MCF 10A (cell line): ENCODE measurements at regions of chr22 and their contacts with region 1.

Region 1: GRCh38 chr22:40597526-40598430 is 38.7 kb downstream of the MRTFA start:
- DNase-seq: no peak
- H3K4me3 Mint-ChIP-seq: peak overlapping the region; percentile 45
- H3K27ac Mint-ChIP-seq: peak overlapping the region; percentile 35
- H3K4me1 Mint-ChIP-seq: peaks cover 41% of the 10 kb centered on the region
- H3K27me3 Mint-ChIP-seq: no peaks in the 10 kb centered on the region
- CTCF ChIP-seq: no peak

Region 2: GRCh38 chr22:40610329-40610850 is 12.6 kb after region 1 on chr22:
- CTCF ChIA-PET with region 1: interaction called, 4 read pairs
- POLR2A ChIA-PET with region 1: interaction called, 10 read pairs
- intact Hi-C with region 1: no loop called
- DNase-seq: no peak
- H3K4me3 Mint-ChIP-seq: no peak overlapping the region
- H3K27ac Mint-ChIP-seq: peak overlapping the region; percentile 16
- H3K4me1 Mint-ChIP-seq: peaks cover 26% of the 10 kb centered on the region
- H3K27me3 Mint-ChIP-seq: no peaks in the 10 kb centered on the region
- CTCF ChIP-seq: no peak

Region 3: DNA sequence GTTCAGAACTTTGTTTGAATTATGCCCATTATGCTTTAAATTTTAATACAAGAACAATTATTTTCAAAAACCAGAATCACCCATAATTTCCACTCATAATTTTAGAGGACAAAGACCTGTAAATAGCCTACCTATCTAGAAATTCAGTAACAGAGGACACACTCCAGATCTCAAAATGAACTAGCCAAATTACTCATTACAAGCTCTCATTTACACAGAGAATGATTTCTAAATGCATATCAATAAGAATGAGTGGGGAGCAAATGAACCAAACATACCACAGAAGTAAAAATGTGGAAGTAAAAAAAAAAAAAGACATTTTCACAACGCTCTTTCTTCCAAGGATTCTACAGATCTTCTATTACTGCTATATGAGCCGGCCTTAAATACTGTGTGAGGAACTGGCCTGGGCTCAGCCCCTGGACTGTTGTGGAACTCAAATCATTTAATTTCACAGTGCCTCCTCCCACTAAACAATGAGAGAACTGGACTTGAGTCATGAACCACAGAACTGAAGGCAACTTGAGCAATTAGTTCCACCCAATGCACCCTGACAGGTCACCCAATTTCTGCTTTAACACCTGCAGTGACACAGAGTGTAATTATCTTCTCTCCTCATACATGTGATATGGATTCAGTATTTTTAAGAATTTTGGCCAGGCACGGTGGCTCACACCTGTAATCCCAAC is 30.7 kb after region 1 on chr22:
- CTCF ChIA-PET with region 1: no interaction called
- POLR2A ChIA-PET with region 1: interaction called, 20 read pairs
- intact Hi-C with region 1: no loop called
- DNase-seq: peak; percentile 68
- H3K4me3 Mint-ChIP-seq: peak overlapping the region; percentile 30
- H3K27ac Mint-ChIP-seq: peak overlapping the region; percentile 65
- H3K4me1 Mint-ChIP-seq: peaks cover 39% of the 10 kb centered on the region
- H3K27me3 Mint-ChIP-seq: no peaks in the 10 kb centered on the region
- CTCF ChIP-seq: no peak